Activated naive CD4-positive, alpha-beta T cell treated with anti-CD3 and anti-CD28 coated beads for 36 hours (primary cell): ENCODE measurements at regions of chr4 and their contacts with region 1.

Region 1: DNA sequence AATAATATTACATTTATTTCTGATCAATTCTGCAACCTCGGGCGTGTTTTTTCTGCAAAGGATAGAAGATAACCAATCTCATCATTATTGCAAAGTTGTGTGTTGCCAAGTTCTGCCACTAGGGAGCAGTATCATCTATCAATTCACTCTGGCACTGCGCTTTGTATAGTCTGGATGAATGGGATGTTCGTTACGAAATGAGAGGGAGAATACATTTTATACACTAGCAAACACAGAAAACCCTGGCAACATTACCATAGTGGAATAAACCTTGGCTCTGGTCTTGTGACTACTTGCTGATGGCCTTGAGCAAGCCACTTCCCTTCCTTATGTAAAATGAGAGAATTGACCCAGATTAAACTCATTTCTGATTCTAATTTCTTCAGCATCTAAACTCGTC is 97.5 kb upstream of the ZNF518B start:
- DNase-seq: peak; percentile 71
- H3K4me3 Mint-ChIP-seq: no peak overlapping the region
- H3K27ac Mint-ChIP-seq: no peak overlapping the region
- H3K4me1 Mint-ChIP-seq: peaks cover 3% of the 10 kb centered on the region
- H3K27me3 Mint-ChIP-seq: peaks cover 11% of the 10 kb centered on the region

Region 2: DNA sequence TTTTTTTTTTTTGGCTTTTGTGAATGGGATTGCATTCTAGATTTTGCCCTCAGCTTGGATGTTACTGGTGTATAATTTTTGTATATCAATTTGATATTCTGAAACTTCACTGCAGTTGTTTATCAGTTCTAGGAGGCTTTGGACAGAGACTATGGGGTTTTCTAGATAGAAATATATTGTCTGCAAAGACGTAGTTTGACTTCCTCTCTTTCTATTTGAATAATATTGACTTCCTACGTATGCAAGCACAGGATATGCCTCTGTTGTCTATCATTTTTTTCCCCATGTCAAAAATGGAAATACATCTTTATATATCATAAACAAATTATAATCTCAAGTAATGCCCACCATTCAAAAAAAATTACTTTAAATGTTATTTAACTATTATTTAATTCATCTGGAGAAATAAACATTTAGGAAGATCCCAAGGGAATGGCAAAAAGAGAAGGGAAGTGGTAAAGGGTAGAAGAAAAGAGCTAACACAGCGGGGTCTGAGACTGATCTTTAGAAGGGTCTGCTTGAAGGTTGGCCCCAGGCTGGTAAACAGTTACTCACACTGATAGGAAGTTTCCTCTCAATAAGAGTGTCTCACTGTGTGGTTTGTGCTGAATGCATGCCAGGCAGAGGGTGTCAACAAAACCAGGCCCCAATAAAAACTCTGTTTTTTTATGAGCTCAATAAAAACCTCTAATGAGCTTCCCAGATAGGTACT is 133.2 kb before region 1 on chr4:
- CTCF ChIA-PET with region 1: no interaction called
- intact Hi-C with region 1: no loop called
- DNase-seq: peak; percentile 9
- H3K4me3 Mint-ChIP-seq: no peak overlapping the region
- H3K27ac Mint-ChIP-seq: no peak overlapping the region
- H3K4me1 Mint-ChIP-seq: peaks cover 3% of the 10 kb centered on the region
- H3K27me3 Mint-ChIP-seq: no peaks in the 10 kb centered on the region

Region 3: DNA sequence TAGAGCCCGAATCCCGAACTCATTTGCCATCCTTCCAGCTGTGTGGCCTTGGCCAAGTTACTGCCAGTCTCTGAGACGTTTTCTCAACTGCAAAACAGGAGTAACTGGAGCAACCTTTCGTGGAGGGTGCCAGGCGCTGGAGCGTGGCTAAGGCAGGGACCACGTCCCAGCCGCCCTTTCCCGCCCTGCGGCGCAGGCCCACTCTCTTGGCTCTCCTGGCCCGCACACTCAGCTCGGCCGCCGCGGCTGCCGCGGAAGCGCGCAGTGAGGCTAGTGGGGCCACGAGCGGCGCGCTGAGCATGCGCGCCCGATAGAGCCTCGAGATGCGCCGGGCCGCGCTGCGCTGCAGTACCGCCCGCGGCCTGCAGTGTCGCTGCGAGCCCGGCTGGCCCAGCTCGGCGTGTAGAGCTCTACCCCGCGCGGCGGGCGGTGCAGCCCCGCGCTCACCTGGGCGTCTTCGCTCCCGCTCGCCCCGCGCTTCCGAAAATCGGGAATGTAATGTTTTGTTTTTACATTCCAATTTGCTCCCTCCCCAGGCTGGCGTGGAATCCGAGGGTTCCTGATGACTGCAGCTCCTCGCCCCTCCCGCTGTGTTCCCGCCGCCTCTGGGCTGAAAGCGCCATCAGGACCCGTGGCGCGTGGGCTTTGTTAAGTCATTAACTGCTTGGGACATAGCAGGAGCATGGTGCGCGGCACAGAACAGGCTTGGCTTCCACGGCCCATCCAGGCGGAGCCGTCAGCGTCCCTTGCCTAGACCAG is 93.4 kb before region 1 on chr4:
- CTCF ChIA-PET with region 1: interaction called, 9 read pairs
- intact Hi-C with region 1: loop called (anchors 1 kb)
- DNase-seq: peak; percentile 65
- H3K4me3 Mint-ChIP-seq: peak overlapping the region; percentile 76
- H3K27ac Mint-ChIP-seq: no peak overlapping the region
- H3K4me1 Mint-ChIP-seq: peaks cover 25% of the 10 kb centered on the region
- H3K27me3 Mint-ChIP-seq: peaks cover 32% of the 10 kb centered on the region